B cell (primary cell): ENCODE measurements at regions of chr15 and their contacts with region 1.

Region 1: GRCh38 chr15:43105778-43106485 is at the start of gene UBR1:
- DNase-seq: peak; percentile 94
- ATAC-seq: peak; percentile 94
- H3K4me3 ChIP-seq: peak within 1 kb of the TSS; percentile 55 to 99 (median 87)
- H3K4me3 Mint-ChIP-seq: peak within 1 kb of the TSS; percentile 89
- H3K27ac ChIP-seq: peak within 1 kb of the TSS; percentile 90 to 96
- H3K27ac Mint-ChIP-seq: peak within 1 kb of the TSS; percentile 98
- H3K4me1 ChIP-seq: peaks cover 21 to 22% of the 10 kb centered on the region in 2 donors
- H3K4me1 Mint-ChIP-seq: peaks cover 49% of the 10 kb centered on the region
- H3K27me3 ChIP-seq: no peaks in the 10 kb centered on the region
- H3K27me3 Mint-ChIP-seq: no peaks in the 10 kb centered on the region
- CTCF ChIP-seq: no peak
- total RNA-seq, gene UBR1: 60.7 and 66.7 TPM in 2 replicates

Region 2: GRCh38 chr15:42994546-42994945 is 111.4 kb before region 1 on chr15:
- CTCF ChIA-PET with region 1: no interaction called
- POLR2A ChIA-PET with region 1: no interaction called
- intact Hi-C with region 1: no loop called
- DNase-seq: no peak
- ATAC-seq: no peak
- H3K4me3 ChIP-seq: no peak overlapping the region
- H3K4me3 Mint-ChIP-seq: no peak overlapping the region
- H3K27ac ChIP-seq: no peak overlapping the region
- H3K27ac Mint-ChIP-seq: no peak overlapping the region
- H3K4me1 ChIP-seq: no peaks in the 10 kb centered on the region
- H3K4me1 Mint-ChIP-seq: no peaks in the 10 kb centered on the region
- H3K27me3 ChIP-seq: no peaks in the 10 kb centered on the region
- H3K27me3 Mint-ChIP-seq: no peaks in the 10 kb centered on the region
- CTCF ChIP-seq: no peak

Region 3: DNA sequence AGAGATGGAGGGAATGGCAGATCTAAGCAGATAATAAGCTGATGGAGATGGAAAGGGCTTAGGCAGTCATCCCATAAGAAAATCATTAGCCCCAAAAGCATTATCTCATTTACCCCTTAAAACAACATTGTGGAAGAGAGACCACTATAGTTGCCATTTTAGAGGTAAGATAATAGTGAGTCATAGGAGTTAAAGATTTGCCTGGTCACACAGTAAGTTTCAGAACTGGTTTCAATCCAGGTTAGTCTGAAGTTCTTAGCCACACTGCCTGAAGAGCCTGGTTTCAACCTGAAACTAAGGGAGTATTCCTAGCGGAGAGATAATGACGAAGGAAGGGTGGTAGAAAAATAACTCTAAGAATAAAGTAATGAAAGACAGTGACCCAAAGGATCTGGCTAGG is 12.9 kb after region 1 on chr15:
- CTCF ChIA-PET with region 1: interaction called, 9 read pairs
- POLR2A ChIA-PET with region 1: interaction called, 6 read pairs
- intact Hi-C with region 1: loop called (anchors 1 kb)
- DNase-seq: no peak
- ATAC-seq: no peak
- H3K4me3 ChIP-seq: peak overlapping the region in 1 of 5 experiments; percentile 33
- H3K4me3 Mint-ChIP-seq: peak overlapping the region; percentile 15
- H3K27ac ChIP-seq: peak overlapping the region; percentile 60 to 68
- H3K27ac Mint-ChIP-seq: peak overlapping the region; percentile 87
- H3K4me1 ChIP-seq: peaks cover 27 to 37% of the 10 kb centered on the region in 2 donors
- H3K4me1 Mint-ChIP-seq: peaks cover 36% of the 10 kb centered on the region
- H3K27me3 ChIP-seq: no peaks in the 10 kb centered on the region
- H3K27me3 Mint-ChIP-seq: no peaks in the 10 kb centered on the region
- CTCF ChIP-seq: no peak

Region 4: DNA sequence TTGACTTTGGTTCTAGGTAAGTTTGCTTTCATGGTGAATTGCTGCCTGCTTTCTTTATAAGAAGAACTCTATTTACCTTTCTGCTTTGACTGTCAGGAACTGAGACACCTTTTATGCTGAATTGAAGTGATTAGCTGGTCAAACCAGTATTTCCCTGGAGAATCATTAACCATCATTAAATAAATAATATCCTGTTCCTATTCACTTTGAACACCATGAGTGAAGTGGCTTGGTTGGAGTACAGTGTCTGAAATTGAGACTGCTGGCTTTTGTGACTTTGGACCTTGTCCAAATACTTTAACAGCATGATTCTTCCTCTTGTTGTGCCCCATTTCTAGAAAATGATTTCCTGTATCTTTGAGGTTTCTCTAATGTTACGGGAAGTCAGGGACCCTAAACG is 21.8 kb after region 1 on chr15:
- CTCF ChIA-PET with region 1: interaction called, 6 read pairs
- POLR2A ChIA-PET with region 1: interaction called, 10 read pairs
- intact Hi-C with region 1: loop called (anchors 1 kb)
- DNase-seq: no peak
- ATAC-seq: no peak
- H3K4me3 ChIP-seq: no peak overlapping the region
- H3K4me3 Mint-ChIP-seq: no peak overlapping the region
- H3K27ac ChIP-seq: no peak overlapping the region
- H3K27ac Mint-ChIP-seq: no peak overlapping the region
- H3K4me1 ChIP-seq: peaks cover 1 to 10% of the 10 kb centered on the region in 2 donors
- H3K4me1 Mint-ChIP-seq: peaks cover 9% of the 10 kb centered on the region
- H3K27me3 ChIP-seq: no peaks in the 10 kb centered on the region
- H3K27me3 Mint-ChIP-seq: no peaks in the 10 kb centered on the region
- CTCF ChIP-seq: no peak

Region 5: GRCh38 chr15:43185157-43186017 is 79.5 kb after region 1 on chr15 and contains the start of gene CCNDBP1:
- CTCF ChIA-PET with region 1: no interaction called
- POLR2A ChIA-PET with region 1: no interaction called
- intact Hi-C with region 1: loop called (anchors 1 kb)
- DNase-seq: peak; percentile 92
- ATAC-seq: peak; percentile 93
- H3K4me3 ChIP-seq: peak within 1 kb of the TSS; percentile 43 to 94 (median 75)
- H3K4me3 Mint-ChIP-seq: peak within 1 kb of the TSS; percentile 99
- H3K27ac ChIP-seq: peak within 1 kb of the TSS; percentile 87 to 94
- H3K27ac Mint-ChIP-seq: peak within 1 kb of the TSS; percentile 98
- H3K4me1 ChIP-seq: peaks cover 21 to 32% of the 10 kb centered on the region in 2 donors
- H3K4me1 Mint-ChIP-seq: peaks cover 38% of the 10 kb centered on the region
- H3K27me3 ChIP-seq: no peaks in the 10 kb centered on the region
- H3K27me3 Mint-ChIP-seq: no peaks in the 10 kb centered on the region
- CTCF ChIP-seq: peak; percentile 67
- total RNA-seq, gene CCNDBP1: 113 and 116 TPM in 2 replicates

Region 6: DNA sequence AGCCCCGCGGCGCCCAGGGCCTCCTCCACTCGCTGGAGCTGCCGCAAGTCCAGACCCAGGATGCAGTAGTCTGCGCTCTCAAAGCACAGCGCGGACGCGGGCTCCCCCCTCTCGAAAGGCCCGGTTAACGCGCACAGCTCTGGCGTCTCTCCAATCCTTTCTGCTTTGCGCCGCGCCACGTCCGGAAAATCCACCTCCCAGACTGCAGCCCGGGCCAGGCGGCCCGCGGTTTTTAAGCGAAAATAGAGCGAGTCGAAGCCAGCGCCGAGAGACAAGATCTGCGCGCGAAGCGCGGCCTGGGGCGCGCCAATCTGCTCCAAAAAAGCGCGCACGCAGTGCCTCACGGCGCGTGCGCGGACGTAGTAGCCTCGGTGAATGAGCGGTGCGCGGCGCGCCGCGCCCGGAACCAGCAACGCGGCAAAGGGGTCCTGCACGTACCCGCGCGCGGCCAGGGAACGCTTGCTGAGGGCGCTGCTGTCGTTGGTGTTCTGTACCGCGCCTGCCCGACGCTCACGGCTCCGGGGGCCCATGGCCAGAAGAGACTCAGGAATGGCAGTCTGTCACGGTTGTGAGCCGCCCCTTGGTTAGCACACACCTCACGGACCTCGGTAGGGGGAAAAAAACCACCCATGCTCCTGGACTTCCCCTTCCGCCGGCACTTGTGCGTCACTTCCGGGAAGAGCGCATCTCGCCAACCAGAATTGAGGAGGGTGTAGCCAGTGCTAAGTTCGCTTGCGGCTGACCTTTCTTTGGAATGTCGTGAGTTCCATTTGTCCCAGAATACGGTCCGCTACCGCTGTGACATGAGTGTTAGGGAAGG is 224.2 kb after region 1 on chr15 and contains the start of gene LCMT2:
- CTCF ChIA-PET with region 1: no interaction called
- POLR2A ChIA-PET with region 1: no interaction called
- intact Hi-C with region 1: loop called (anchors 1 kb)
- DNase-seq: peak; percentile 98
- ATAC-seq: peak; percentile 88
- H3K4me3 ChIP-seq: peak within 1 kb of the TSS; percentile 70 to 88 (median 84)
- H3K4me3 Mint-ChIP-seq: peak within 1 kb of the TSS; percentile 99
- H3K27ac ChIP-seq: peak within 1 kb of the TSS; percentile 94 to 98
- H3K27ac Mint-ChIP-seq: peak within 1 kb of the TSS; percentile 100
- H3K4me1 ChIP-seq: peaks cover 22 to 23% of the 10 kb centered on the region in 2 donors
- H3K4me1 Mint-ChIP-seq: peaks cover 32% of the 10 kb centered on the region
- H3K27me3 ChIP-seq: no peaks in the 10 kb centered on the region
- H3K27me3 Mint-ChIP-seq: no peaks in the 10 kb centered on the region
- CTCF ChIP-seq: peak; percentile 9
- total RNA-seq, gene LCMT2: 12.8 and 16.2 TPM in 2 replicates